Activated CD4-positive, alpha-beta memory T cell treated with anti-CD3 and anti-CD28 coated beads for 36 hours (primary cell): ENCODE measurements at regions of chr19 and their contacts with region 1.

Region 1: DNA sequence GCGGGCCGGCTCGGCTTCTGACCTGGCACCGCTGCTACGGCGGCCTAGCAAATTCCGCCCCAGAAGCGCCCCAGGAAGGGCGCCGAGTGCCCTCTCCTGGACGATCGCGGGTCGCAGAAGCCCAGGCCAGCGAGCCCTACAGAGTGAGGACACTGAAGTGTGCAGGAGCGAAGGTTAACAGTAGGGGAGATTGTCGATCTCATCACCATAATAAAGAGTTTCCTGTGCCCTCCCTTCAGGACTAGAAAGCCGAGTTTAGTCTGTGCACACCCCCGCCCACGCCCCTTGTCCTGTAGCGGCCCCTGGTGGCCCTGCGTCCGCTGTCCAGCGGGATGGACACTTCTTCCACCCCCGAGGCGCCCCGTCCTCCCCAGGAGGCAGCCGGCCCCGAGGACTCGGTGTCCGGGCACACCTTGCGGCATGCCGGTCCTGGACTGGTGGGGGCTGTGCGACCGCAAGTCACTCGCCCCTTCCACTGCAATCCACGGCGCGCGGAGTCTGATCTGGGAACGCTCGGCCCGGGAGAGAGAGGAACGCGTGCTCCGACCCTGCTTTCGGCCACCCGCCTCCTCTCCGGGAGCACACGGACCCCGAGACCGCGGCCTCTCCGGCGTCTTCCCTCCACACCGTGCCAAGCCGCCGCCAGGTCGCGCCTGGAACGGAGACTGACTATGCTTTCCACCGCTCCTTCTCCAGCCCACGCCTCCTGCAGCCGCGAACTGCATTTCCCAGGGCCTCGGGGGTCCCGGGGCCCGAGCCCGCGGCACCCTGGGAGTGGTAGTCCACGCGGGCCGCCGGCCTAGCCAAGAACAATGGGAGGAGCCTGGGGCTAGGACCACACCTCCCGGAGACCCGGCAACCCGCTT is 769 bp upstream of the KMT2B start:
- DNase-seq: peak; percentile 97
- H3K4me3 Mint-ChIP-seq: peak overlapping the region; percentile 91
- H3K27ac Mint-ChIP-seq: peak overlapping the region; percentile 99
- H3K4me1 Mint-ChIP-seq: peaks cover 39% of the 10 kb centered on the region
- H3K27me3 Mint-ChIP-seq: peaks cover 1% of the 10 kb centered on the region

Region 2: GRCh38 chr19:35347171-35347929 is 369.7 kb before region 1 on chr19 and contains the start of gene FFAR1:
- CTCF ChIA-PET with region 1: no interaction called
- POLR2A ChIA-PET with region 1: no interaction called
- intact Hi-C with region 1: loop called (anchors 1 kb)
- DNase-seq: peak; percentile 82
- H3K4me3 Mint-ChIP-seq: peak within 1 kb of the TSS; percentile 63
- H3K27ac Mint-ChIP-seq: peak within 1 kb of the TSS; percentile 96
- H3K4me1 Mint-ChIP-seq: peaks cover 41% of the 10 kb centered on the region
- H3K27me3 Mint-ChIP-seq: peaks cover 4% of the 10 kb centered on the region
- total RNA-seq, gene FFAR1: 0.12 TPM in 1 of 2 experiments, not detected in the other

Region 3: DNA sequence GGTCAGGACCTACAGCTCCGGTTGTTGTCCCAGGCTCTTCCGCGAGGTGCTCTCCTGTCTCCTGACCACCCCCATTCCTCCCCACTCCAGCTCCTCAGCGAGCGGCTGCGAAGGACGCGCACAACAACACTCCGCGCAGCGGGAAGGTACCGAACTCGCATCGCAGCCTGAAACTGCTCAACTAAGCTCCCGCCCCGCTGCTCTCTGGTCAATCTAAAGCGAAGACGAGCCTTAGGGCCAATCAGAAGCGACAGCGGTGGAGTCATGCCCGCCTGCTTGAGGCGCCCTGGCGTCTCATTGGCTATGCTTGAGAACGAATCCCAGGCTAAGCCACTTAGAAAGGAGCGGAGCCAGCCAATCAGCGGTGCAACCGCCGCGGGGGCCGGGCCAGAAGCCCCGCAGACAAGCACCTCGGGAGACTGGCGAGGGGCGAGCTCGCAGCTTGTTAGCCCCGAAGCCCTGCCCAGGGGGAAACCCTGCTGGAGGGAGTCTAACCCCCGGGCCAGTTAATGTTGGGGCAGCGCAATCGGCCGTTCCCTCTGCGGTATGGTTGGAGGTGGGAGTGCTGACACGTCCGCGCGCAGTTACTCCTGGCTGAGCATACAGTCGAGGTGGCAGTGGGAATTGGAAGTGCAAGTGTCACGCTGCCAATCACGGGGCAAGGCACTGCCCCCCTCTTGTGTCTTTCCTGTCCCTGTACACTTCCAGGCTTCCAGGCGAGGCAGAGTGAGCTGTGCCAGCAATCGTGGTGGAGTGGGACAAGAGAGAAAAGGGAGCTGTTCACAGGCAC is 14.6 kb before region 1 on chr19:
- CTCF ChIA-PET with region 1: interaction called, 197 read pairs
- POLR2A ChIA-PET with region 1: interaction called, 96 read pairs
- intact Hi-C with region 1: no loop called
- DNase-seq: peak; percentile 97
- H3K4me3 Mint-ChIP-seq: peak overlapping the region; percentile 93
- H3K27ac Mint-ChIP-seq: peak overlapping the region; percentile 94
- H3K4me1 Mint-ChIP-seq: peaks cover 3% of the 10 kb centered on the region
- H3K27me3 Mint-ChIP-seq: no peaks in the 10 kb centered on the region

Region 4: GRCh38 chr19:35748106-35749020 is 31.3 kb after region 1 on chr19 and contains the start of gene LIN37:
- CTCF ChIA-PET with region 1: interaction called, 12 read pairs
- POLR2A ChIA-PET with region 1: interaction called, 45 read pairs
- intact Hi-C with region 1: loop called (anchors 1 kb)
- DNase-seq: peak; percentile 99
- H3K4me3 Mint-ChIP-seq: peak within 1 kb of the TSS; percentile 94
- H3K27ac Mint-ChIP-seq: peak within 1 kb of the TSS; percentile 88
- H3K4me1 Mint-ChIP-seq: peaks cover 42% of the 10 kb centered on the region
- H3K27me3 Mint-ChIP-seq: no peaks in the 10 kb centered on the region
- total RNA-seq, gene LIN37: 7.5 TPM

Region 5: GRCh38 chr19:35767288-35768081 is 50.5 kb after region 1 on chr19:
- CTCF ChIA-PET with region 1: no interaction called
- POLR2A ChIA-PET with region 1: no interaction called
- intact Hi-C with region 1: no loop called
- DNase-seq: no peak
- H3K4me3 Mint-ChIP-seq: no peak overlapping the region
- H3K27ac Mint-ChIP-seq: no peak overlapping the region
- H3K4me1 Mint-ChIP-seq: no peaks in the 10 kb centered on the region
- H3K27me3 Mint-ChIP-seq: no peaks in the 10 kb centered on the region

Region 6: GRCh38 chr19:35899547-35900214 is 182.6 kb after region 1 on chr19:
- CTCF ChIA-PET with region 1: no interaction called
- POLR2A ChIA-PET with region 1: interaction called, 5 read pairs
- intact Hi-C with region 1: loop called (anchors 1 kb)
- DNase-seq: peak; percentile 93
- H3K4me3 Mint-ChIP-seq: peak overlapping the region; percentile 92
- H3K27ac Mint-ChIP-seq: peak overlapping the region; percentile 97
- H3K4me1 Mint-ChIP-seq: peaks cover 59% of the 10 kb centered on the region
- H3K27me3 Mint-ChIP-seq: no peaks in the 10 kb centered on the region

Region 7: DNA sequence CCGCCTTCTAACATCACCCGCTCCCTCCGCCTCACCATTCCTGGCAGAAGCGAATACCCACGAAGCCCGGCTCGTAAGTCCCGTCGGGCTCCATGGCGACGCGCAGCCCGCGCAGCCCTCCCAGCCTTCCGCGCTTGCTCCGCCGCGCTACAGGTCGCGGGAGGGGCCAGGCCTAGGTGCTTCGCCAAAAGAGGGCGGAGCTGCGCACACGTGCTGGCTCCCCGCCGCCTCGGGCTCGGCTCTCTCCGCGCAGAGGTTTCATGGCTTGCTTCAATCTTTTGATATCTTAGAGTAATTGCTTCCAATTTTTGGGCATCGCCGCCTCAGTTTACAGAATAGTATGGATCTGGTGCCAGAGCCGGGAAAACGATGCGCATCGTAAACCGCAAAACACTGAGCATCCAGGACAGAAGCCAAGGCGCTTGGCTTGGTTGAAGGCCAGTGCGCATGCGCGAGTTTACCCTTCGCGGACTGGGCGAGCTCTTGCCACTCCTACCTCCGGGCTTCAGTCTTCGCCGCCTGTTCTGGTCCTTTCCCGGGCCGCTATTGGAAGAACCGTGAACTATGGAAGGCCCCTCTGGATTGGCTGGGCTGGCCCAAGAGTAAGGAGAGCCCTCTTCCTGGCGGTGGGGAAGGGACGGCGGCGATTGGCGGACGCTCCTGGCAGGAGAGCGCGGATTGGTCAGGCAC is 397.9 kb after region 1 on chr19 and contains the start of gene POLR2I:
- CTCF ChIA-PET with region 1: no interaction called
- POLR2A ChIA-PET with region 1: no interaction called
- intact Hi-C with region 1: loop called (anchors 10 kb)
- DNase-seq: peak; percentile 99
- H3K4me3 Mint-ChIP-seq: peak within 1 kb of the TSS; percentile 99
- H3K27ac Mint-ChIP-seq: peak within 1 kb of the TSS; percentile 94
- H3K4me1 Mint-ChIP-seq: peaks cover 36% of the 10 kb centered on the region
- H3K27me3 Mint-ChIP-seq: peaks cover 5% of the 10 kb centered on the region
- total RNA-seq, gene POLR2I: 84.1 to 84.8 TPM

Region 8: GRCh38 chr19:36139473-36140303 is 422.7 kb after region 1 on chr19 and contains the start of gene CAPNS1:
- CTCF ChIA-PET with region 1: no interaction called
- POLR2A ChIA-PET with region 1: no interaction called
- intact Hi-C with region 1: no loop called
- DNase-seq: peak; percentile 96
- H3K4me3 Mint-ChIP-seq: peak within 1 kb of the TSS; percentile 92
- H3K27ac Mint-ChIP-seq: peak within 1 kb of the TSS; percentile 97
- H3K4me1 Mint-ChIP-seq: peaks cover 26% of the 10 kb centered on the region
- H3K27me3 Mint-ChIP-seq: no peaks in the 10 kb centered on the region
- total RNA-seq, gene CAPNS1: 430 to 447 TPM